GM10248 (cell line): ENCODE measurements at regions of chr9 and their contacts with region 1.

Region 1: GRCh38 chr9:120839146-120839545 is 3.6 kb downstream of the PSMD5 start:
- DNase-seq: no peak
- CTCF ChIP-seq: no peak

Region 2: GRCh38 chr9:120562861-120563443 is 276.2 kb before region 1 on chr9:
- CTCF ChIA-PET with region 1: no interaction called
- POLR2A ChIA-PET with region 1: interaction called, 10 read pairs
- DNase-seq: no peak
- CTCF ChIP-seq: no peak

Region 3: DNA sequence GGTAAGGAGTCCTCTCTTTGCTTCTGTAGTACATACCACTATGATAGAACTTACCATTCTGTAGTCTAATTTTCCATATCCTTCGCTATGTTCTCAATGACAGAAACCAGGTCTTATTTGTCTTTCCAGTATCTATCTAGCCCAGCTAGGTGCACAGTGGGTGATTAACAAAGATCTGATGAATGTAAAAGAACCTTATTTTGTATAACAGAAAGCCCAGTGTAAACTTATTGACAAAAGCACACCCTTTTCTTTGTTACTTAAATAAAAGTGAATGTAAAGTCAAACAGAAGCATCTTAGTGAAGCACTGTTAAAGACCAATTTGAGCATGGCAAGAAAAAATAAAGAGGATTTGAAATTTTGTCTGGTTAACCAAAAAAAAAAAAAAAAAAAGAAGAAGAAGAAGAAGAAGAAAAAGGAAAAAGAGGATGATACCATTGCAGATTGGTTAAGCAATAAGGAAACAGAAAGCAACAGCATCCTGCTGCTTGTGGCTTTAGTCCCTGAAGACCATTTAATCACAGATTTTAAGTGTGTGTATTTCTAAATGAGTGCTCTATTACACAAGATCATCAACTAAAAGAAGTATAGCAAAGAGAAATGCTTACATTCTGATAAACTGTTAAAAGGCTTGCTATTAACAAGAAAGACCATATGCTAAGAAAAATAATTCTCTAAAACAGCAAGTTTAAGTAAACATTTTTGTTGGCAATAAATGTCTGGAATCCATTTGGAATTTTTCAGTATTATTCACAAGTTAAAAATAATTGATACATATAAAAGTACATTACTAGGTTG is 146.0 kb before region 1 on chr9:
- CTCF ChIA-PET with region 1: no interaction called
- POLR2A ChIA-PET with region 1: no interaction called
- DNase-seq: no peak
- CTCF ChIP-seq: no peak

Region 4: DNA sequence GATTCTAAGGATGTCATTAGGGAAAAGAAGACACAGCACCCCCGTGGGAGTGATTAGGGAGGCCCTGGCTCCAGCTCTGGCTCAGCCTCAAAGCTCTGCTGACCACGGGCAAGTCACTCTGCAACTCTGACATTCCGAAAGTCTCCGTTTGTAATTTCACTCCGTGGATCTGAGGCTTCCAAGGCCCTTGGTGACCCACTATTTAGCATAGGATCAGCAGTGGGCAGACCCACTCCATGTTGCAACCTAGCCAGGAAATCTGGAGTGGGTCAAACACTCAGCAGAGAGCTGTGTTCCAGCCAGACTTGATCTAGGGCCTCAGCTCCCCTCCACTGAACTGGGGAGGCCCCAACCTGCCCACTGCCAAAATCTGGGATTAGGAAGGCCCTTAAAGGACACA is 26.0 kb after region 1 on chr9:
- CTCF ChIA-PET with region 1: no interaction called
- POLR2A ChIA-PET with region 1: no interaction called
- DNase-seq: no peak
- CTCF ChIP-seq: no peak